Left ventricle myocardium superior (tissue), 1 donor: ENCODE measurements at regions of chr16 and their contacts with region 1.

Region 1: GRCh38 chr16:77850636-77851333 is 62.4 kb downstream of the VAT1L start:
- DNase-seq: no peak
- ATAC-seq: peak; percentile 10

Region 2: GRCh38 chr16:77951775-77952174 is 101.0 kb after region 1 on chr16:
- intact Hi-C with region 1: loop called (anchors 10 kb)
- DNase-seq: no peak
- ATAC-seq: no peak